Natural killer cell (primary cell): ENCODE measurements at regions of chr13 and their contacts with region 1.

Region 1: GRCh38 chr13:46553886-46554858 is 1.2 kb downstream of the LRCH1 start:
- DNase-seq: peak; percentile 71 to 88
- ATAC-seq: peak; percentile 68 to 83 (median 72)
- H3K4me3 ChIP-seq: peak overlapping the region; percentile 92
- H3K4me3 Mint-ChIP-seq: peak overlapping the region; percentile 95
- H3K27ac ChIP-seq: peak overlapping the region; percentile 91
- H3K27ac Mint-ChIP-seq: peak overlapping the region; percentile 93 to 94
- H3K4me1 ChIP-seq: peaks cover 20% of the 10 kb centered on the region
- H3K4me1 Mint-ChIP-seq: peaks cover 40 to 50% of the 10 kb centered on the region in 2 donors
- H3K27me3 ChIP-seq: peaks cover 3% of the 10 kb centered on the region
- H3K27me3 Mint-ChIP-seq: peaks cover 1 to 2% of the 10 kb centered on the region in 2 donors
- CTCF ChIP-seq: peak; percentile 24

Region 2: DNA sequence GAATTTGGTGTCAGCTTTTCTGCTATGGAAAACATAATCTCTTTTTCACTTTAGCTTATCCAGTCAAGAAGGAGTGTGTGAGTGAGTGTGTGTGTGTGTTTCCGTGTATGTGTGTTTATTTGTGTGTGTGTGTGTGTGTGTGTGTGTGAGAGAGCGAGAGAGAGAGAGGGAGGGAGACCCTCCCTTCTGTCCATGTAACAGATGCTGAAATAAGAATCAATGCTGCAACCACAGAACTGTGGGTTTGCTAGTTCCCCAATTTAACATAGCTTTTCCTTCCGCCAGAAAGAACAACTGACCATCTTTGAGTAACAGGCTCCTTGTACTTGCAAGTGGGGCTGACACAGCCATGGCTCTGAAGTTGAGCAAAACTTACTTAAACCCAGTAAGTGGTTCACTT is 377.4 kb before region 1 on chr13:
- intact Hi-C with region 1: loop called (anchors 10 kb)
- DNase-seq: peak in 1 of 2 donors; percentile 52
- ATAC-seq: peak; percentile 6 to 56 (median 23)
- H3K4me3 ChIP-seq: peak overlapping the region; percentile 25
- H3K4me3 Mint-ChIP-seq: peak overlapping the region; percentile 95
- H3K27ac ChIP-seq: peak overlapping the region; percentile 76
- H3K27ac Mint-ChIP-seq: peak overlapping the region; percentile 84 to 96
- H3K4me1 ChIP-seq: peaks cover 42% of the 10 kb centered on the region
- H3K4me1 Mint-ChIP-seq: peaks cover 80 to 92% of the 10 kb centered on the region in 2 donors
- H3K27me3 ChIP-seq: no peaks in the 10 kb centered on the region
- H3K27me3 Mint-ChIP-seq: no peaks in the 10 kb centered on the region
- CTCF ChIP-seq: no peak

Region 3: GRCh38 chr13:46492946-46493345 is 61.2 kb before region 1 on chr13:
- intact Hi-C with region 1: loop called (anchors 2 kb)
- DNase-seq: peak in 1 of 2 donors; percentile 62
- ATAC-seq: no peak
- H3K4me3 ChIP-seq: no peak overlapping the region
- H3K4me3 Mint-ChIP-seq: no peak overlapping the region
- H3K27ac ChIP-seq: no peak overlapping the region
- H3K27ac Mint-ChIP-seq: no peak overlapping the region
- H3K4me1 ChIP-seq: no peaks in the 10 kb centered on the region
- H3K4me1 Mint-ChIP-seq: no peaks in the 10 kb centered on the region
- H3K27me3 ChIP-seq: no peaks in the 10 kb centered on the region
- H3K27me3 Mint-ChIP-seq: peaks cover 7 to 11% of the 10 kb centered on the region in 2 donors
- CTCF ChIP-seq: peak; percentile 83

Region 4: DNA sequence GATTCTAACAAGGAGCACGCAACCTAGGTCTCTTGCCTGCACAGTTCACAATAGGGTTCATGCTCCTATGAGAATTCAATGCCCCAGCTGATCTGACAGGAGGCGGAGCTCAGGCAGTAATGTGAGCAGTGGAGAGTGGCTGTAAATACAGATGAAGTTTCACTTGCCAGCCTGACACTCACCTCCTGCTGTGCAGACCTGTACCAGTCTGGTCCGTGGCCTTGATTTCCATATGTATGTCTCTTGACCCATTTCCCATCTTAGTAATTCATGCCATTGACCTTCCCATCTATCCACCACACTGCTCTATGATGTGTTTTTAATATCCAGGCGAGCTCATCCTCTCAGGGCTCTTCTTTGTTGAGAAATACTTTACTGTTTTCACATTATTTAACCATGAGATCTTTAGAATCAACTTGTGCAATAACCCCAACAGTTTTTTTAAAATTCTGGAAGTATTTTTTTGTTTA is 94.0 kb after region 1 on chr13:
- intact Hi-C with region 1: no loop called
- DNase-seq: peak in 1 of 2 donors; percentile 20
- ATAC-seq: peak; percentile 54 to 64 (median 55)
- H3K4me3 ChIP-seq: no peak overlapping the region
- H3K4me3 Mint-ChIP-seq: no peak overlapping the region
- H3K27ac ChIP-seq: no peak overlapping the region
- H3K27ac Mint-ChIP-seq: peak overlapping the region; percentile 6 to 51
- H3K4me1 ChIP-seq: peaks cover 6% of the 10 kb centered on the region
- H3K4me1 Mint-ChIP-seq: peaks cover 25 to 46% of the 10 kb centered on the region in 2 donors
- H3K27me3 ChIP-seq: no peaks in the 10 kb centered on the region
- H3K27me3 Mint-ChIP-seq: no peaks in the 10 kb centered on the region
- CTCF ChIP-seq: no peak

Region 5: DNA sequence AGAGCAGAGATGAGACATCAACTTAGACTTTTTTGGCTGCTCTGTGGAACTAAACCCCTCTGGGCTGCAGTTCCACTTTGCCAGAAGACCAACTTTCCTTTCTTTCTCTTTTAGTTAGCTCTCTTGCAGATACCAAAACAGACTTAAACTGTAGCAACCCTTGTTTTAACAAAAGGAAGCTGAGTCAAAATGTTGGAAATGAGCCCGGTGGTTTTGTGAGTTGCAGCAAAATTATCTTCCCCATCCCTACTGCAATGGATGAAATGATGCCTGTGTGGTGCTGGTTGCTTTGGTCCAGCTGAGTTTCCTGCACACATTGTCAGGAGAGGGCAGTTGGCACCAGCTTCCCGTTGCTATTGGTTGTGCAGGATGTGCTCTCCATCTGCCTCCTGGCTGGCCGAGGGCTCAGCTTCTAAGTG is 114.1 kb after region 1 on chr13:
- intact Hi-C with region 1: loop called (anchors 1 kb)
- DNase-seq: peak in 1 of 2 donors; percentile 30
- ATAC-seq: peak; percentile 30 to 46 (median 38)
- H3K4me3 ChIP-seq: peak overlapping the region; percentile 50
- H3K4me3 Mint-ChIP-seq: peak overlapping the region; percentile 91
- H3K27ac ChIP-seq: peak overlapping the region; percentile 96
- H3K27ac Mint-ChIP-seq: peak overlapping the region; percentile 91 to 95
- H3K4me1 ChIP-seq: peaks cover 22% of the 10 kb centered on the region
- H3K4me1 Mint-ChIP-seq: peaks cover 48 to 57% of the 10 kb centered on the region in 2 donors
- H3K27me3 ChIP-seq: no peaks in the 10 kb centered on the region
- H3K27me3 Mint-ChIP-seq: no peaks in the 10 kb centered on the region
- CTCF ChIP-seq: no peak

Region 6: GRCh38 chr13:46679369-46680120 is 125.4 kb after region 1 on chr13:
- intact Hi-C with region 1: loop called (anchors 1 kb)
- DNase-seq: peak; percentile 64 to 69
- ATAC-seq: peak; percentile 91 to 96 (median 93)
- H3K4me3 ChIP-seq: peak overlapping the region; percentile 26
- H3K4me3 Mint-ChIP-seq: no peak overlapping the region
- H3K27ac ChIP-seq: peak overlapping the region; percentile 96
- H3K27ac Mint-ChIP-seq: no peak overlapping the region
- H3K4me1 ChIP-seq: peaks cover 21% of the 10 kb centered on the region
- H3K4me1 Mint-ChIP-seq: peaks cover 9 to 22% of the 10 kb centered on the region in 2 donors
- H3K27me3 ChIP-seq: no peaks in the 10 kb centered on the region
- H3K27me3 Mint-ChIP-seq: no peaks in the 10 kb centered on the region
- CTCF ChIP-seq: no peak

Region 7: GRCh38 chr13:46721054-46721453 is 166.9 kb after region 1 on chr13:
- intact Hi-C with region 1: loop called (anchors 1 kb)
- DNase-seq: peak; percentile 31 to 73
- ATAC-seq: peak; percentile 58 to 68 (median 64)
- H3K4me3 ChIP-seq: no peak overlapping the region
- H3K4me3 Mint-ChIP-seq: no peak overlapping the region
- H3K27ac ChIP-seq: no peak overlapping the region
- H3K27ac Mint-ChIP-seq: no peak overlapping the region
- H3K4me1 ChIP-seq: peaks cover under 1% of the 10 kb centered on the region
- H3K4me1 Mint-ChIP-seq: peaks cover 16 to 19% of the 10 kb centered on the region in 2 donors
- H3K27me3 ChIP-seq: no peaks in the 10 kb centered on the region
- H3K27me3 Mint-ChIP-seq: no peaks in the 10 kb centered on the region
- CTCF ChIP-seq: peak; percentile 79

Region 8: GRCh38 chr13:46751811-46752635 is 197.9 kb after region 1 on chr13:
- intact Hi-C with region 1: loop called (anchors 2 kb)
- DNase-seq: peak; percentile 62 to 84
- ATAC-seq: peak; percentile 94 to 97 (median 95)
- H3K4me3 ChIP-seq: no peak overlapping the region
- H3K4me3 Mint-ChIP-seq: peak overlapping the region; percentile 68
- H3K27ac ChIP-seq: peak overlapping the region; percentile 37
- H3K27ac Mint-ChIP-seq: peak overlapping the region; percentile 65 to 76
- H3K4me1 ChIP-seq: peaks cover 27% of the 10 kb centered on the region
- H3K4me1 Mint-ChIP-seq: peaks cover 47 to 52% of the 10 kb centered on the region in 2 donors
- H3K27me3 ChIP-seq: peaks cover 4% of the 10 kb centered on the region
- H3K27me3 Mint-ChIP-seq: peaks cover 11 to 15% of the 10 kb centered on the region in 2 donors
- CTCF ChIP-seq: no peak